AG04449 (cell line): ENCODE measurements at regions of chr7 and their contacts with region 1.

Region 1: GRCh38 chr7:90412458-90413184 is 9.4 kb downstream of the CLDN12 start:
- DNase-seq: no peak
- H3K4me3 ChIP-seq: no peak overlapping the region
- CTCF ChIP-seq: peak; percentile 13

Region 2: GRCh38 chr7:90430614-90431471 is 18.2 kb after region 1 on chr7:
- CTCF ChIA-PET with region 1: interaction called, 77 read pairs
- POLR2A ChIA-PET with region 1: no interaction called
- DNase-seq: no peak
- H3K4me3 ChIP-seq: no peak overlapping the region
- CTCF ChIP-seq: no peak